ENCODE measurements at regions of chr13 and their contacts with region 1.

Region 1: GRCh38 chr13:46288570-46289259 is 77.0 kb downstream of the LRRC63 start:
- DNase-seq: peak; percentile 15
- H3K4me3 Mint-ChIP-seq: no peak overlapping the region
- H3K27ac Mint-ChIP-seq: no peak overlapping the region
- H3K4me1 Mint-ChIP-seq: no peaks in the 10 kb centered on the region
- H3K27me3 Mint-ChIP-seq: peaks cover 7% of the 10 kb centered on the region
- CTCF ChIP-seq: peak; percentile 37

Region 2: GRCh38 chr13:46160471-46161066 is 128.1 kb before region 1 on chr13:
- CTCF ChIA-PET with region 1: no interaction called
- intact Hi-C with region 1: loop called (anchors 5 kb)
- DNase-seq: peak; percentile 18
- H3K4me3 Mint-ChIP-seq: no peak overlapping the region
- H3K27ac Mint-ChIP-seq: no peak overlapping the region
- H3K4me1 Mint-ChIP-seq: peaks cover 12% of the 10 kb centered on the region
- H3K27me3 Mint-ChIP-seq: no peaks in the 10 kb centered on the region
- CTCF ChIP-seq: peak; percentile 21

Region 3: GRCh38 chr13:46492946-46493345 is 204.2 kb after region 1 on chr13:
- CTCF ChIA-PET with region 1: no interaction called
- intact Hi-C with region 1: no loop called
- DNase-seq: peak; percentile 27
- H3K4me3 Mint-ChIP-seq: no peak overlapping the region
- H3K27ac Mint-ChIP-seq: no peak overlapping the region
- H3K4me1 Mint-ChIP-seq: no peaks in the 10 kb centered on the region
- H3K27me3 Mint-ChIP-seq: peaks cover 26% of the 10 kb centered on the region
- CTCF ChIP-seq: peak; percentile 11

Measured in Calu3 (cell line).